Activated CD4-positive, alpha-beta memory T cell treated with anti-CD3 and anti-CD28 coated beads for 36 hours (primary cell): ENCODE measurements at regions of chr1 and their contacts with region 1.

Region 1: GRCh38 chr1:20194757-20195461 is 8.6 kb upstream of the PLA2G2C start:
- DNase-seq: peak; percentile 84
- H3K4me3 Mint-ChIP-seq: no peak overlapping the region
- H3K27ac Mint-ChIP-seq: no peak overlapping the region
- H3K4me1 Mint-ChIP-seq: peaks cover 2% of the 10 kb centered on the region
- H3K27me3 Mint-ChIP-seq: peaks cover 27% of the 10 kb centered on the region

Region 2: DNA sequence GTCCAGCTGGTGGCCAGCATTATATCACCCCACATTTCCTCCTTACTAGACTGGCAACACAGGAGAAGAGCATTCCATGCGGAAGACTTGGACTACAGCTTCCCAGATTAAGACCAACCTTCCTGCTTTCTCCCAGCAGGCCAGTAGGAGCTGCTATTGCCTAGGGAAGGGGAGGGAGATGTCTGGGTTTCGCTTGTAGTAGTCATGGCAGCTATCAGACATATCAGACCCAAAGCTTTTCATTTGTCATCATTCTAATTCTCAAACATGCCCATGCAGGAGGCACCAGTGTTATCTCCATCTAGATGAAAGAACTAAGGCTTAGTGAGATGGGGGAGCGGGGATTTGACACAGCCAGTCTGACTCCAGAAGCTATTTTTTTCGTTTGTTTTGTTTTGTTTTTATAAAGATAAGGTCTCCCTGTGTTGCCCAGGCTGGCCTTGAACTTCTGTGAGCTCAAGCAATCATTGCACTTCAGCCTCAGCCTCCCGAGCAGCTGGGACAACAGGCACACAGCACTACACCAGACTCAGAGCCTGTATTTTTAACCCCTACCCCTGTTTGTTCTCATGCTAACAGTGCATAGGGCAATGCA is 220.0 kb before region 1 on chr1:
- CTCF ChIA-PET with region 1: interaction called, 19 read pairs
- POLR2A ChIA-PET with region 1: no interaction called
- intact Hi-C with region 1: no loop called
- DNase-seq: peak; percentile 46
- H3K4me3 Mint-ChIP-seq: no peak overlapping the region
- H3K27ac Mint-ChIP-seq: no peak overlapping the region
- H3K4me1 Mint-ChIP-seq: no peaks in the 10 kb centered on the region
- H3K27me3 Mint-ChIP-seq: peaks cover 13% of the 10 kb centered on the region

Region 3: DNA sequence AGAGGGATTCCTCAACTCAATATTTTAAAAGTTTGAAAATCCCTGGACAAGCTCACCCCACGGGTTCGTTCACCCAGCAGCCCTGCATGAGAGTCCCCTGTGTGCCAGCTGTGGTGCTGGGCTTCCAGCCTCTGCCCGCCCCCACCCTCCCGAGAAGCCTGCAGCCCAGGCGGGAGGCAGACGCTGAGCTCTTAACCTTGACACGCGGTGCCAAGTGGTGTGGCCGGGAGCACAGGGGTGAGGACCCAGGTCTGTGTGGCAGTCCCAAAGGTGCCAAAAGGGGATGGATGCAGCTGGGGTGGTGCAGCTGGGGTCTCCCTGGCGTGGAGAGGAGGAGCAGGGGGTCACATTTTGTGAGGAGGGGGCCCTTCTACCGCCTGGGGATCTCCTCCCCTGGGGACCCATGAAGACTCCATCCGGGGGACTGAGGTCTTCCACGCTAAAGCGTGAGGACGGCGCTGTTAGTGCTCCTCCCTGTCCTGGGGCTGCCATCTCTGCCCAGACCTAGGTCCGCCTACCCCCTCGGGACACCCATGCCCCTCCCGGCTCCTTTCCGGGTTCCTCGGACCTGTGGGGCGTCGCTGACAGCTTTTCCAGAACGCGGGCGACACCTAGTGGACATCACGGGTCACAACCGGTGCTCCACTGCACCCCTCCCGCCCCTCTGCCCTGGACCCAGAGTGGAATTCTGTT is 42.9 kb before region 1 on chr1:
- CTCF ChIA-PET with region 1: interaction called, 37 read pairs
- POLR2A ChIA-PET with region 1: no interaction called
- intact Hi-C with region 1: no loop called
- DNase-seq: peak; percentile 84
- H3K4me3 Mint-ChIP-seq: peak overlapping the region; percentile 53
- H3K27ac Mint-ChIP-seq: no peak overlapping the region
- H3K4me1 Mint-ChIP-seq: peaks cover 14% of the 10 kb centered on the region
- H3K27me3 Mint-ChIP-seq: peaks cover 3% of the 10 kb centered on the region

Region 4: GRCh38 chr1:20165522-20165951 is 29.4 kb before region 1 on chr1:
- CTCF ChIA-PET with region 1: interaction called, 58 read pairs
- POLR2A ChIA-PET with region 1: no interaction called
- intact Hi-C with region 1: loop called (anchors 1 kb)
- DNase-seq: peak; percentile 29
- H3K4me3 Mint-ChIP-seq: no peak overlapping the region
- H3K27ac Mint-ChIP-seq: no peak overlapping the region
- H3K4me1 Mint-ChIP-seq: no peaks in the 10 kb centered on the region
- H3K27me3 Mint-ChIP-seq: peaks cover 2% of the 10 kb centered on the region

Region 5: GRCh38 chr1:20212685-20213331 is 17.9 kb after region 1 on chr1:
- CTCF ChIA-PET with region 1: interaction called, 13 read pairs
- POLR2A ChIA-PET with region 1: no interaction called
- intact Hi-C with region 1: no loop called
- DNase-seq: peak; percentile 66
- H3K4me3 Mint-ChIP-seq: no peak overlapping the region
- H3K27ac Mint-ChIP-seq: no peak overlapping the region
- H3K4me1 Mint-ChIP-seq: peaks cover 6% of the 10 kb centered on the region
- H3K27me3 Mint-ChIP-seq: peaks cover 39% of the 10 kb centered on the region

Region 6: DNA sequence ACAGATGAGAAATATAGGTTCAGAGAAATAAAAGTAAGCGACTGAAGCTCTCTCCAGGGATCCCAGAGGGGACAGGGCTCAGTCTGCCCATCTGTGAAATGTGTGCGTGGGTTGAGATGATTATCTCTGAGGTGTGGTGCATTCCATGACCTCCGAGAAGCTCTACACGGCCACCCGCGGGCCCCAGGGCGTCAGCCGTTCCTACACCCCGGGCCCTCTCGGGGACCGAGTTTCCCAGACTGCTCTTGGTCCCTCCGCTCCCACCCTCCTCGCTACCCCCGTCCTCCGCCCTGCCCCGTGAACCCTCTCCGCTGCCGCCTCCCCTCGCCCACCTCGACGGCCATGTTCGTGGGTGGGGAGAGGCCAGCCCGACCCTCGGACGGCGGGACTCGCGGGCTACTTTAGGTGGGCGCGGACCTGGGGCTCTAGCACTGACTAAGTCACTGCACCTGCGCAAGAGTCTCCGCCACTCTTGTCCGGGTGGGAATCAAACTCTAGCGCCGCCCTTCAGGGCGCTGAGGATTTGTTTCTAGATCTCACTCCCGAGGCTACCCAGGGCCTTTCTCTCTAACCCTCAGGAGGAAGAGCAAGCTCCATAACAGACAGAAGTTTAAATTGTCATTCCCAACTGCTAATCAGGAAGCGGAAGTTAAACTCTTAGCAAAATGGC is 48.0 kb after region 1 on chr1:
- CTCF ChIA-PET with region 1: no interaction called
- POLR2A ChIA-PET with region 1: no interaction called
- intact Hi-C with region 1: no loop called
- DNase-seq: no peak
- H3K4me3 Mint-ChIP-seq: no peak overlapping the region
- H3K27ac Mint-ChIP-seq: no peak overlapping the region
- H3K4me1 Mint-ChIP-seq: peaks cover under 1% of the 10 kb centered on the region
- H3K27me3 Mint-ChIP-seq: peaks cover 19% of the 10 kb centered on the region